ENCODE measurements at regions of chr3 and their contacts with region 1.

Region 1: DNA sequence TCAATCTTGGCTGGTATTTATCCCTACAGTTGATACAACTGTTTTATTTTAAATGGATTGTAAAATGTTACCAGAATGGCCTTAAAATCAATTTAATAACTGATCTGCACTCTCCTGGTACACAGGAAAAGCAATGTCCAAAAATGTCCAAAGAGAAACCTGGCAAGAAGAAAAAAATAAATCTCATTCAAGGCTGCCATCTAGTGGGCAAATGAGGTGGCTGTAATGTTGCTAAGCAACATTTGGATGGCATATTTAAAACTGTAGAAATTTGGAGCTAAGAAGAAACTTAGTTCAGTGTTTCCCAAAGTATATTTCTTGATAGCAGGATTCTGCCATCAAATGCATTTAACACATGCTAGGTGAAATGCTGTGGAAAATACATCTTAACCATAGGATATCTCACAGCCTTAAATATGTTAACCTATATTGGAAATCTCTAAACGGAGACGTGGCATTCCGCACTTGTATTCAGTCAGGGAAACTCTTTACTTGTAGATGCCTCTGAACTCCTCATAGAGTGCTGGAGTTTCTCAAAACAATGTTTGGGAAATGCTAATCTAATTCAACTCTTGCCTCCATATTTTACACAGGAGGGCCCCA is 216.8 kb downstream of the ERC2 start:
- DNase-seq: no peak
- H3K4me3 ChIP-seq: no peak overlapping the region
- H3K27ac ChIP-seq: no peak overlapping the region
- H3K4me1 ChIP-seq: peaks cover 0 to 12% (median 8%) of the 10 kb centered on the region in 4 experiments; a peak in 5 of 7 replicates
- H3K27me3 ChIP-seq: no peaks in the 10 kb centered on the region
- CTCF ChIP-seq: peak in 2 of 3 experiments; percentile 58 to 72; a peak in 3 of 4 replicates
- EP300 ChIP-seq: no peak
- POLR2A ChIP-seq: no peak
- RAD21 ChIP-seq: peak; percentile 83 to 84

Region 2: GRCh38 chr3:55974421-55975165 is 276.9 kb before region 1 on chr3:
- CTCF ChIA-PET with region 1: no interaction called
- POLR2A ChIA-PET with region 1: no interaction called
- DNase-seq: no peak
- H3K4me3 ChIP-seq: no peak overlapping the region
- H3K27ac ChIP-seq: no peak overlapping the region
- H3K4me1 ChIP-seq: 0 out of 7 replicates have a peak, but pooled peaks cover 0 to 3% (median 0%) of the 10 kb centered on the region in 4 experiments
- H3K27me3 ChIP-seq: peaks cover 0 to 1% (median 0%) of the 10 kb centered on the region in 4 experiments; a peak in 1 of 7 replicates
- CTCF ChIP-seq: no peak
- EP300 ChIP-seq: no peak
- POLR2A ChIP-seq: no peak
- RAD21 ChIP-seq: no peak

Region 3: GRCh38 chr3:56089739-56090138 is 161.7 kb before region 1 on chr3:
- CTCF ChIA-PET with region 1: interaction called, 19 read pairs
- POLR2A ChIA-PET with region 1: no interaction called
- DNase-seq: no peak
- H3K4me3 ChIP-seq: no peak overlapping the region
- H3K27ac ChIP-seq: no peak overlapping the region
- H3K4me1 ChIP-seq: no peaks in the 10 kb centered on the region
- H3K27me3 ChIP-seq: no peaks in the 10 kb centered on the region
- CTCF ChIP-seq: peak in 2 of 3 experiments; percentile 23 to 32; a peak in 2 of 4 replicates
- EP300 ChIP-seq: no peak
- POLR2A ChIP-seq: no peak
- RAD21 ChIP-seq: peak; percentile 41 to 66

Region 4: GRCh38 chr3:56238299-56238698 is 13.1 kb before region 1 on chr3:
- CTCF ChIA-PET with region 1: interaction called, 13 read pairs
- POLR2A ChIA-PET with region 1: interaction called, 3 read pairs
- DNase-seq: no peak
- H3K4me3 ChIP-seq: no peak overlapping the region
- H3K27ac ChIP-seq: no peak overlapping the region
- H3K4me1 ChIP-seq: peaks cover 3 to 4% (median 3%) of the 10 kb centered on the region in 4 experiments; a peak in 6 of 7 replicates
- H3K27me3 ChIP-seq: no peaks in the 10 kb centered on the region
- CTCF ChIP-seq: no peak
- EP300 ChIP-seq: no peak
- POLR2A ChIP-seq: no peak
- RAD21 ChIP-seq: no peak

Region 5: DNA sequence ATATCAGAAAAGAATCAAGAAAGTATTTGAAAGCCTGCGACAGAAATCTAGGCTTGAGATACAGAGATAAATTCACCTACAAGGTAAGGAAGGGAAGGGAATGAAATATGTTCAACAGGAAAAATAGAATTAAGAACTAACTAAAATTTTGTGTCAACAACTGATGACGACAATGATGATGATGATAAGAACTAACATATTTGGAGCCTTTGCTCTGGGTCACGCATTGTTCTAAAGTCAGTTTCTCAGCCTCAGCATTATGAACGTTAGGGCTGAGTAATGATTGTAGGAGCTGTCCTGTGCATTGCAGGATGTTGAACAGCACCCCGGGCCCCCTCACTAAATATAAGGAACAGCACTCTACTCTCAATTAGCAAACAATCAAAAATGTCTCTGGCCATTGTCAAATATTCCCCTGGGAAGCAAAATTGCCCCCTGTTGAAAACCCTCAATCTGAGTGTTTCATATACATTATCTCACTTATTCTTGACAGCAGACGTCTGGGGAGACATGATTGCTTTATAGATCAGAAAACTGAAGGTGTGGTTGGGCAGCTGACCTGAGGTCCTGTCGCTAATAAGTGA is 128.4 kb after region 1 on chr3:
- CTCF ChIA-PET with region 1: no interaction called
- POLR2A ChIA-PET with region 1: no interaction called
- DNase-seq: no peak
- H3K4me3 ChIP-seq: no peak overlapping the region
- H3K27ac ChIP-seq: no peak overlapping the region
- H3K4me1 ChIP-seq: no peaks in the 10 kb centered on the region
- H3K27me3 ChIP-seq: peaks cover 0 to 1% (median 0%) of the 10 kb centered on the region in 4 experiments; a peak in 1 of 7 replicates
- CTCF ChIP-seq: no peak
- EP300 ChIP-seq: no peak
- POLR2A ChIP-seq: no peak
- RAD21 ChIP-seq: no peak